Right cardiac atrium (tissue), 5 donors: ENCODE measurements at regions of chr1 and their contacts with region 1.

Region 1: DNA sequence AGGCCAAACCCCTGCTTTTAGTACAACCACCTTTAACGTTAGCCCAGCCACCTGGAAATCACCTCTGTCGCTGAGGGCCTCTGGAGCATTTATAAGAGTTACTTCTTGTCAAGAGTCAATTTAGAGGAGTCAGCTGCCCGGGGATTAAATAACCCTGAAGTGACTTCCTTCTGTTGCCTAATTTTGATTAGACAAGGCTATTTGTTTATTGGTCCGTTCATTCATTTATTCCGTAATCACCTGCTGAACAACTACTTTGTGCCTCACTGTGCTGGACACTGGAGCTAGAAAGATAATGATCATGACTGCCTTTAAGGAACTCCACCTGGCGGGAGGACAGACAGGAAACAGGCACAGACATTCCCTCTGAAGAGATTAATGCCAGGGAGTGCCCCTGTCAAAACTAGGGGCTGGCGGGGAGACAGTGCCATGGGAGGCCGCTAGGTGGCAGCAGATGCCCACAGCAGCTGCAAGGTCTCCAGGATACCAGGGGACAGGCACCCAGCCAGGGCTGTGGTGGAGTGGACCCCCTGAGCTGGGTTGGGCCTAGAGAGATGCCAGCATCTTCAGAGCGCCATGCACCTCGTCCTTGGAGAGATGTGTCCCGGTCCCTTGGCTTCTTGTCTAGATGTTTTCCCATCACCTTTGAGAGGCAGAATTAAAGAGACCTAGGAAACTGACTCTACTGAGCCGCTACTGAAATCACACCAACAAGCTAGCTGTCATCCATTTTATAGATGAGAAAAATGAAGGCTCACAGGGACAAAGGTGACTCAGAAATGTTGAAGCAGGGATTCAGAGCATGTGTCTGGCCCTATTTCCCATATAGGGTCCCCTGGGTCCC is 3.7 kb downstream of the REN start:
- DNase-seq: peak; percentile 81 to 93 (median 92)
- ATAC-seq: peak; percentile 84 to 88
- H3K4me3 ChIP-seq: no peak overlapping the region
- H3K27ac ChIP-seq: no peak overlapping the region
- H3K4me1 ChIP-seq: no peaks in the 10 kb centered on the region
- H3K27me3 ChIP-seq: no peaks in the 10 kb centered on the region

Region 2: DNA sequence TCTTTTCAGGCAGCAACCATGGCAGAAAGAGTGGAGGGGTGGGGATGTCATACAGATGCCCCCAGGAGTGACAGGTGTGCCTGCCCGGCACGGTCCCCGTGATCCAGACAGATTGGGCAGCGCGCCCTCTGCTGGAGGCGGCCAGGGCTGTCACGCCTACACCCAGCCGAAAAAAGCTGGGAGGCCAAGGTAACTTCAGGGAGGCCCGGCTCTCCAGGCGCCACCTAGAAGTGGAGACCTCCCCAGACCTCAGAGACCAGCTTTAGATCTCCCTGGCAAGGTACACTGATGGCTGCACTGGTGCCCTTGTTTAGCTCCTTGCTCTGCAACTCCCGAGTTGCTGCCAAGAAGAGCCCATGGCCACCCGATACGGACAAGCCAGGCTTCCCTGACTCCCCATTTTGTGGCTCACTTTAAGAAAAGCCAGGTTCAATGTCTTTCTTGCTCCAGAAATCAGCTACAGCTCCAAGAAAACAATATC is 44.7 kb after region 1 on chr1:
- intact Hi-C with region 1: loop called in 3 of 4 experiments (anchors 5 kb)
- DNase-seq: peak; percentile 63 to 88 (median 87)
- ATAC-seq: peak; percentile 87 to 89
- H3K4me3 ChIP-seq: no peak overlapping the region
- H3K27ac ChIP-seq: no peak overlapping the region
- H3K4me1 ChIP-seq: no peaks in the 10 kb centered on the region
- H3K27me3 ChIP-seq: no peaks in the 10 kb centered on the region

Region 3: DNA sequence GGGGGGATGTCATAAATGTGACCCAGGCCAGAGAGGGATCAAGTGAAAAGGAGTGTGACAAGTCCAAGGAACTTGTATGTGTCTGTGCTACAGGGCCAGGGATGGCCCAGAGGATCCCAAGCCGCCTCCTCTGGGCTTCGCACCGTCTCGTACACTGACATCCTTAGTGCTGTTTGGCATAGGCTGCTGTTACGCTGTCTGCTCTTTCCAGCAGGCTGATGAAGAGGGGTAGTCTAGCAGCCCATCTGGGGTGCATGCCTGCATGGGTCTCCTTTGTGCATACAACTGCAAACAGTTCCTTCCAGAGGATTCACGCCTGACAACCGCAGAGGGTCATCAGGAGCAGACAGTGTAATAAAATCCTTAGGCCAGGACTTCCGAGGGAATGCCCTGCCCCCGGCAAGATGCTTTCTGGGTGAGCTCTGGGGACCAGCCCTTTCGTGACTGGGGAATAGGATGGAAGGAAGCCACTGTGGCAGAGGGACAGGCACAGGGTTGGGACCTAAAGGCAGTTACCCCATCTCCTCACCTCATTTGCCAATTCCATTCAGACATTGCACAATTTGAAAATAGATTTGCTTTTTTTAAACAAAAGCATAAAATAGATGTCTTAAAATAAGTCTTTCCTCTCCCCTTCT is 57.6 kb after region 1 on chr1:
- intact Hi-C with region 1: no loop called
- DNase-seq: no peak
- ATAC-seq: peak in 1 of 2 donors; percentile 7
- H3K4me3 ChIP-seq: no peak overlapping the region
- H3K27ac ChIP-seq: no peak overlapping the region
- H3K4me1 ChIP-seq: no peaks in the 10 kb centered on the region
- H3K27me3 ChIP-seq: no peaks in the 10 kb centered on the region